ENCODE measurements at regions of chr14 and their contacts with region 1.

Region 1: GRCh38 chr14:98182393-98183055 is 1089.5 kb downstream of the BCL11B start:
- DNase-seq: peak; percentile 73
- H3K4me3 Mint-ChIP-seq: peak overlapping the region; percentile 72
- H3K27ac Mint-ChIP-seq: peak overlapping the region; percentile 98
- H3K4me1 Mint-ChIP-seq: peaks cover 82% of the 10 kb centered on the region
- H3K27me3 Mint-ChIP-seq: no peaks in the 10 kb centered on the region

Region 2: GRCh38 chr14:98077176-98077575 is 105.3 kb before region 1 on chr14:
- intact Hi-C with region 1: no loop called
- DNase-seq: no peak
- H3K4me3 Mint-ChIP-seq: no peak overlapping the region
- H3K27ac Mint-ChIP-seq: no peak overlapping the region
- H3K4me1 Mint-ChIP-seq: no peaks in the 10 kb centered on the region
- H3K27me3 Mint-ChIP-seq: no peaks in the 10 kb centered on the region

Region 3: GRCh38 chr14:98099527-98099926 is 83.0 kb before region 1 on chr14:
- intact Hi-C with region 1: loop called (anchors 1 kb)
- DNase-seq: no peak
- H3K4me3 Mint-ChIP-seq: no peak overlapping the region
- H3K27ac Mint-ChIP-seq: peak overlapping the region; percentile 38
- H3K4me1 Mint-ChIP-seq: peaks cover 25% of the 10 kb centered on the region
- H3K27me3 Mint-ChIP-seq: no peaks in the 10 kb centered on the region

Region 4: GRCh38 chr14:98227000-98227726 is 44.6 kb after region 1 on chr14:
- intact Hi-C with region 1: loop called (anchors 2 kb)
- DNase-seq: peak; percentile 82
- H3K4me3 Mint-ChIP-seq: peak overlapping the region; percentile 70
- H3K27ac Mint-ChIP-seq: peak overlapping the region; percentile 87
- H3K4me1 Mint-ChIP-seq: peaks cover 60% of the 10 kb centered on the region
- H3K27me3 Mint-ChIP-seq: no peaks in the 10 kb centered on the region

Region 5: GRCh38 chr14:99192028-99192621 is 1009.6 kb after region 1 on chr14:
- intact Hi-C with region 1: loop called (anchors 5 kb)
- DNase-seq: peak; percentile 80
- H3K4me3 Mint-ChIP-seq: peak overlapping the region; percentile 90
- H3K27ac Mint-ChIP-seq: peak overlapping the region; percentile 89
- H3K4me1 Mint-ChIP-seq: peaks cover 89% of the 10 kb centered on the region
- H3K27me3 Mint-ChIP-seq: no peaks in the 10 kb centered on the region

Region 6: GRCh38 chr14:99271951-99272631 is 1089.6 kb after region 1 on chr14 and contains the start of gene BCL11B:
- intact Hi-C with region 1: loop called (anchors 2 kb)
- DNase-seq: peak; percentile 96
- H3K4me3 Mint-ChIP-seq: peak within 1 kb of the TSS; percentile 91
- H3K27ac Mint-ChIP-seq: peak within 1 kb of the TSS; percentile 95
- H3K4me1 Mint-ChIP-seq: peaks cover 42% of the 10 kb centered on the region
- H3K27me3 Mint-ChIP-seq: peaks cover 13% of the 10 kb centered on the region
- total RNA-seq, gene BCL11B: 48.2 and 48.5 TPM in 2 replicates

Measured in activated CD4-positive, alpha-beta T cell treated with anti-CD3 and anti-CD28 coated beads, Interleukin-2, amount 10 ng/mL, durations not matched to agents 24 days and 14 days (primary cell).